ENCODE measurements at regions of chr16 and their contacts with region 1.

Region 1: DNA sequence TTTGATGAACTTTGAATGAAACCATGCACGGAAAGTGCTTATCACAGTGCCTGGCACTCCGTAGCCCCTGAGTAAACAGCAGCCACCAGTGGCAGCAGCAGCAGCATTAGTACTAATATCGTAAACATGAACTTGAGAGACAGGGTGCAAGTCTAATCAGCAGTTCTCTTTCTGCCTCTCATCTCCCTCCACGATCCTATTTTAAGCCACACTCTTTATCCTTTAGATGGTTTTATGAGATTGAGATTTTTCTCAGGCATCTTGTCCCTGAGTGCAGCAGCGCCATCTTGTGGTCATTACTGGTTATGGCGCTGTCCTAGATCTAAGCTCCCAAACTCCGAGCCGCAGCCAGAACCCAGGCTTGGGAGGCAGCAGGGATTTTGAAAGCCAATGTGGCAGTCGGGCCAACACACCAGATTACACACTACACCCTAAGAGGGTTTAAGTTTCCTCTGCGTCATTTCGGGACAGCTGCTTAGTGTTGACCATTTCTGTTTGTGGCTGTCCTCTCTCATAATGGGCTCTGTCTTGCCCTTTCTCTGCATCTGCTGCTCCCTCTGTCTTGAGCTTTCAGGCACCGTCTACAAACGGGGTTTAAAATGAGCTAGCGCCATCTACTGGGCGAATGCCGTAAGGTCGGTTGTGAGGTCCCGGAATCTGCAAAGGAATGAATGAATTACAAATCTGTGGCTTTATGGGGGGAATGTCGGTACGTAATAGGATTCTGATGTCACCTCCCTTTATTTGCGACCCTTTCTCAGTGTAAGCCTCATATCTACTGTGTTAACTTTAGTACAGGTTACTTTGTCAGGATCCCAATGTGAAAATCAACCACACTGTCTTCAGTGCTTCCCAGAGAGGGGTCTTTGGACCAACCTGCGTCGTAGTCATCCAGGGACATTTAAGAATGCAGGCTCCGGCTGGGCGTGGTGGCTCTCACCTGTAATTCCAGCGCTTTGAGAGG is 64.5 kb downstream of the CYLD start:
- DNase-seq: peak; percentile 85
- CTCF ChIP-seq: peak; percentile 96

Region 2: DNA sequence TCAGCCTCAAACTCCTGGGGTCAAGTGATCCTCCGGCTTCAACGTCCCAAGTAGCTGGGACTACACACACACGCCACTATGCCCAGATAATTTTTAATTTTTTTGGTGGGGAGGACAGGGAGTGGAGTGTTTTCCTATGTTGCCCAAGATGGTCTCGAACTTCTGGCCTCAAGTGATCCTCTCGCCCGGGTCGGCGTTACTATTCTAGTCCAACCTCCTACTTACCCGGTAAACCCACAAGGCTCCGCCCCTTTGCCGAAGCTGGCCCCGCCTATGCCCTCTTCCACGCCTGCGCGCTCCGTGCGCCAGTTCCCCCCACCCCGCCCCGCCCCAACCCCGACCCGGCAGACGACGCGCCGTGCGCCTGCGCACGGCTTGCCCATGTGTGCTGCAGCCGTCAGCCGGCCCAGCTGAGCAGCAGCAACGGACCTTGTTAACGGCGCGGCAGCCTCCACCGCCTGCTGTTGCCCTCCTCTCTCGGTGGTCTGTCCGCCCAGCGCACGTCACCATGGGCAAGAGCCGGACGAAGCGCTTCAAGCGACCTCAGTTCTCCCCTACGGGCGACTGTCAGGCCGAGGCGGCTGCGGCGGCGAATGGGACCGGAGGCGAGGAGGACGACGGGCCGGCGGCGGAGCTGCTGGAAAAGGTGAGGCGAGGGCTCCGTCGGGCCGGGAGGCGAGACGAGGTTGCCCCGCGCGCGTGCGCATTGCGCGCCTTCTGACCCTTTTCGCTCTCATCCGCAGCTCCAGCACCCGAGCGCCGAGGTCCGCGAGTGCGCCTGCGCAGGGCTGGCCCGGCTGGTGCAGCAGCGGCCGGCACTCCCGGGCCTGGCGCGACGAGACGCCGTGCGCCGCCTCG is 740.5 kb before region 1 on chr16 and contains the start of gene HEATR3:
- CTCF ChIA-PET with region 1: interaction called, 11 read pairs
- POLR2A ChIA-PET with region 1: no interaction called
- DNase-seq: peak; percentile 94
- CTCF ChIP-seq: no peak

Region 3: GRCh38 chr16:50326949-50327402 is 479.4 kb before region 1 on chr16:
- CTCF ChIA-PET with region 1: interaction called, 105 read pairs
- POLR2A ChIA-PET with region 1: no interaction called
- DNase-seq: peak; percentile 49
- CTCF ChIP-seq: peak; percentile 51

Region 4: GRCh38 chr16:50548125-50548908 is 258.1 kb before region 1 on chr16 and contains the start of gene NKD1:
- CTCF ChIA-PET with region 1: interaction called, 11 read pairs
- POLR2A ChIA-PET with region 1: no interaction called
- DNase-seq: peak; percentile 94
- CTCF ChIP-seq: no peak

Region 5: GRCh38 chr16:50681021-50681885 is 125.1 kb before region 1 on chr16 and contains the start of gene SNX20:
- CTCF ChIA-PET with region 1: interaction called, 232 read pairs
- POLR2A ChIA-PET with region 1: no interaction called
- DNase-seq: peak; percentile 73
- CTCF ChIP-seq: no peak

Region 6: DNA sequence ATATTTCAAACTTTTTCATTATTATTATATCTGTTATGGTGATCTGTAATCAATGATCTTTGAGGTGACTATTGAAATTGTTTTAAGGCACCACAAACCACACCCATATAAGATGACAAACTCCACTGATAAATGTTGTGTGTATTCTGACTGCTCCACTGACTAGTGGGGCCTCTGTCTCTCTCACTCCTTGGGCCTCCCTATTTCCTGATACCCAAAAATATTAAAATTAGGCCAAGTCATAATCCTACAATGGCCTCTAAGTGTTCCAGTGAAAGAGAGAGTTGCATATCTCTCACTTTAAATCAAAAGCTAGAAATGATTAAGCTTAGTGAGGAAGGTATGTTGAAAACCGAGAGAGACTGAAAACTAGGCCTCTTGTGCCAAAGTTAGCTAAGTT is 41.1 kb before region 1 on chr16:
- CTCF ChIA-PET with region 1: interaction called, 18 read pairs
- POLR2A ChIA-PET with region 1: no interaction called
- DNase-seq: no peak
- CTCF ChIP-seq: no peak

Measured in GM10248 (cell line).